ENCODE measurements at regions of chr5 and their contacts with region 1.

Region 1: DNA sequence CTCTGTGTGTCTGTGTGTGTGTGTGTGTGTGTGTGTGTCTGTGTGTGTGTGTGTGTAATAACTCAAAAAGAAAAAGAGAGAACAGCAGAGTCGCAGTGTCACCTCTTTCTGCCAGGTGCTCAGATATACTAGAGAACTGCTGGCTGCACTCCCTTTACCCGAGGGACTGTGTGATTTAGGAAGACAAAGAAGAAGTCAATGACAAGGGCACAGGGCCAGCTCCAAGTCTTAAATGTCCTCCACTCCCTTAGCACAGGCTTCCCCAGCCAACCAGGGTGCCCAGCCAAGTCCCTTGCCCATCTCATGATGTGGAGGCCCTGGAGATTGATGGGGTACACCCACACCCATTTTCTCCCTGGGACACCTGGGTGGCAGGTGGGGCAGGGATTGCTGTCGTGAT is 8.7 kb downstream of the CCNJL start:
- DNase-seq: no peak
- H3K4me3 ChIP-seq: no peak overlapping the region
- CTCF ChIP-seq: no peak

Region 2: GRCh38 chr5:160213537-160213936 is 90.2 kb before region 1 on chr5:
- in situ Hi-C with region 1: no loop called
- DNase-seq: no peak
- H3K4me3 ChIP-seq: no peak overlapping the region
- CTCF ChIP-seq: no peak

Region 3: GRCh38 chr5:160230686-160231527 is 72.8 kb before region 1 on chr5:
- in situ Hi-C with region 1: loop called (anchors 10 kb)
- DNase-seq: peak; percentile 76
- H3K4me3 ChIP-seq: no peak overlapping the region
- CTCF ChIP-seq: no peak

Region 4: GRCh38 chr5:160253441-160253840 is 50.2 kb before region 1 on chr5:
- in situ Hi-C with region 1: loop called (anchors 5 kb)
- DNase-seq: no peak
- H3K4me3 ChIP-seq: no peak overlapping the region
- CTCF ChIP-seq: no peak

Region 5: GRCh38 chr5:160342403-160342941 is 38.8 kb after region 1 on chr5:
- in situ Hi-C with region 1: no loop called
- DNase-seq: peak; percentile 56
- H3K4me3 ChIP-seq: no peak overlapping the region
- CTCF ChIP-seq: no peak

Region 6: DNA sequence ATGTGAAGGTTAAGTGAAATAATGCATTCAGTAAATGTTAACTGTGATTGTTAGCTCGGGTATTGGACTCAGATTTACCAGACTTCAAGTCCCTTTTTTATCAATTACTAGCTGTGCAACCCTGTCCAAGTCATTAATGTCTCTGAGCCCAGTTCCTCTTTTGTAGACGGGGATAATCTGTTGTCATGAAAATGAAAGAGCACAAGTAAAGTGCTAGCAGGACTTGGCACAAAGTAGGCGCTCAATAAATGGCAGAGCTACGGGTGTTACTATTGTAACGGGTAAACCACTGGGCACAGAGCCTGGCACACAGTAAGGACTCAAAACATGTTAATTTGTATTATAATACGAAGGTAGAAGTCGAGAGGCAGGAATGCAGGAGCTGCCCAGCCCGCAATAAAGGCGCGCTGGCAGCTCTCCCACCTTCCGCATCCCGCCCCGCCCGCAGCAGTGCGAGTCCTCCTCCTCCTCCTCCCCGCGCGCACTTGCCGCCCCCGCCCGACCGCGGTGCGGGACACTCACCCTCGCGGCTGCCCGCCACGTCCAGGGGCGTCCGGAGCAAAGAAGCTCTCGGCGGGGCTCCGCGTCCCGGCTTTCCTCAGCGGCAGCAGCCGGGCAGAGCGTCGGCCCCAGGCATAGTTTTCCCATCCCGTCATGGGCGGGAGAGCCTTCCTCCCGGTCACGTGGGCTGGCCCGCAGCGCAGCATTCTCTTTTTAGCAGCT is 66.5 kb after region 1 on chr5 and contains the start of gene C1QTNF2:
- in situ Hi-C with region 1: no loop called
- DNase-seq: peak; percentile 24
- H3K4me3 ChIP-seq: peak within 1 kb of the TSS; percentile 52
- CTCF ChIP-seq: no peak